Activated B cell treated with CpG ODN at 0.5 μM for 24 hours (primary cell): ENCODE measurements at regions of chr1 and their contacts with region 1.

Region 1: GRCh38 chr1:202565890-202566602 is 144.2 kb downstream of the SYT2 start:
- DNase-seq: no peak
- ATAC-seq: peak; percentile 95
- H3K4me3 Mint-ChIP-seq: peak overlapping the region; percentile 44
- H3K27ac Mint-ChIP-seq: peak overlapping the region; percentile 46
- H3K4me1 Mint-ChIP-seq: peaks cover 37% of the 10 kb centered on the region
- H3K27me3 Mint-ChIP-seq: no peaks in the 10 kb centered on the region
- CTCF ChIP-seq: no peak

Region 2: GRCh38 chr1:202531472-202531811 is 34.6 kb before region 1 on chr1:
- CTCF ChIA-PET with region 1: no interaction called
- POLR2A ChIA-PET with region 1: no interaction called
- intact Hi-C with region 1: loop called (anchors 5 kb)
- DNase-seq: no peak
- ATAC-seq: peak; percentile 25
- H3K4me3 Mint-ChIP-seq: no peak overlapping the region
- H3K27ac Mint-ChIP-seq: peak overlapping the region; percentile 78
- H3K4me1 Mint-ChIP-seq: peaks cover 25% of the 10 kb centered on the region
- H3K27me3 Mint-ChIP-seq: no peaks in the 10 kb centered on the region
- CTCF ChIP-seq: no peak

Region 3: GRCh38 chr1:202615501-202616354 is 49.7 kb after region 1 on chr1:
- CTCF ChIA-PET with region 1: no interaction called
- POLR2A ChIA-PET with region 1: no interaction called
- intact Hi-C with region 1: loop called (anchors 5 kb)
- DNase-seq: no peak
- ATAC-seq: peak; percentile 82
- H3K4me3 Mint-ChIP-seq: peak overlapping the region; percentile 77
- H3K27ac Mint-ChIP-seq: peak overlapping the region; percentile 64
- H3K4me1 Mint-ChIP-seq: peaks cover 50% of the 10 kb centered on the region
- H3K27me3 Mint-ChIP-seq: peaks cover 4% of the 10 kb centered on the region
- CTCF ChIP-seq: no peak

Region 4: DNA sequence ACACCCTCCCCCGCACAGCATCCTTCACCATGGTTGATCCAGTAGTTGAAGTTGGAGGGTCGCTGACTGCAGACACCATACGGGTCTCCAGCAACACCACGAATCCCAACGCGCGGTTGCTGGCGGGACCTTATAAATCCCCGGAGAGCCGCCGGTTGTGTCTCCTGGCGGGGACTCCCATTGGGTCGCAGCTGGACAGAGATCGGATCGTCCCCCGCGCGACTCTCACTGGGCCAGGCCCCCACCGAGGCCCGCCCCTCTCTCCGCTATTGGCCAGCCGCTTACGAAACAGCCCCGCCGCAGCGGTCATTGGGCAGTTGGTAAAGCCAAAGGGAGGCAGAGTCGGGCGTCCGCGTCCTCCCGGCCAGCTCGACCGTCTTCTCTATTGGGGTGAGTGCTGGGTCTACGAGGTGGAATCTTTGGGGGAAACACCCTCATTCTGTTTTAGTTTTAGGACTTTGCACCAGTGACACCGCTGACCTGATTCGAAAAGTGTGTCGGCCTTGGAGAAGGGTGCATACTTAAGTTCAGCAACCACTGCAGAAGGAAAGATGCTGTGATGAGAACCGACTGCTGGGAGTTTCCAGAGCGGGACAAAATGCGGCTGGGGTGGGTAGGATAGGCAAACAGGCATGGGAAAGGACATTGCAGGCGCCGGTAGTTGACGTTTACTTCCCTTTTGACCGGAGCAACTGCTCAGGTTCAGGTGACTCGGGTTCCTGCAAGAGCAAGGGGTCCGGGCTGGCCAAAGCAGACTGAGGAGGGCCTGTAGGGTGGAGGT is 295.6 kb after region 1 on chr1:
- CTCF ChIA-PET with region 1: no interaction called
- POLR2A ChIA-PET with region 1: no interaction called
- intact Hi-C with region 1: no loop called
- DNase-seq: peak; percentile 50
- ATAC-seq: peak; percentile 96
- H3K4me3 Mint-ChIP-seq: peak overlapping the region; percentile 89
- H3K27ac Mint-ChIP-seq: peak overlapping the region; percentile 3
- H3K4me1 Mint-ChIP-seq: peaks cover 13% of the 10 kb centered on the region
- H3K27me3 Mint-ChIP-seq: peaks cover 14% of the 10 kb centered on the region
- CTCF ChIP-seq: no peak